ENCODE measurements at regions of chr7 and their contacts with region 1.

Region 1: GRCh38 chr7:157474689-157475088 is 137.9 kb downstream of the DNAJB6 start:
- DNase-seq: no peak
- H3K4me3 ChIP-seq: no peak overlapping the region
- H3K4me3 Mint-ChIP-seq: peak overlapping the region in 2 of 8 donors; percentile 13 to 34
- H3K27ac ChIP-seq: no peak overlapping the region
- H3K27ac Mint-ChIP-seq: peak overlapping the region in 5 of 7 donors; percentile 19 to 80 (median 43)
- H3K4me1 ChIP-seq: peaks cover 55% of the 10 kb centered on the region
- H3K4me1 Mint-ChIP-seq: peaks cover 33 to 82% (median 52%) of the 10 kb centered on the region in 4 donors
- H3K27me3 ChIP-seq: no peaks in the 10 kb centered on the region
- H3K27me3 Mint-ChIP-seq: no peaks in the 10 kb centered on the region

Region 2: DNA sequence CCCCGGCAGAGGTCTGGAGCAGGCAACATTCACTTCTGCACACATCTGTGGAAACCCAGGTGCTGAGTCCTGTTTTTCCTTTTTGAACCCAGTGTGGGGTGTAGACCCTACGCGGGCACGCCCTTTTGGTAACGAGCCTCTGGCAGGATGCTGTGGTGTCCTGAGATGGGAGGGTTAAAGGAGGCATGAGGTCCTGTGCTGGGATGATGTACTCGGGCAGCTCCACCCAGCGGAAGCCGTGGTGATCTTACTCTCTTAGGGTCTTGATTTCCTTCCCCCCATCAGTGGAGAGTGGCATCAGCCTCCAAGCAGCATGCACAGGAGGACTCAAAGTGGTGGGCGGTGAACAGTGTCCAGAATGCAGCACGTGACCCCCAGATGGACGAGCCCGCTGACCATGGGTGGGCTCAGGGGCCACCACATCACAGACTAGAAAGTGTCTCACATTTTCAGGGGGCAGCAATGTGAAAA is 10.7 kb after region 1 on chr7:
- CTCF ChIA-PET with region 1: interaction called, 6 read pairs
- POLR2A ChIA-PET with region 1: interaction called, 57 read pairs
- intact Hi-C with region 1: loop called (anchors 2 kb)
- DNase-seq: peak in 2 of 5 donors; percentile 24 to 35
- H3K4me3 ChIP-seq: no peak overlapping the region
- H3K4me3 Mint-ChIP-seq: peak overlapping the region in 5 of 8 donors; percentile 2 to 51 (median 20)
- H3K27ac ChIP-seq: no peak overlapping the region
- H3K27ac Mint-ChIP-seq: peak overlapping the region in 4 of 7 donors; percentile 30 to 70 (median 55)
- H3K4me1 ChIP-seq: peaks cover 29% of the 10 kb centered on the region
- H3K4me1 Mint-ChIP-seq: peaks cover 11 to 27% (median 20%) of the 10 kb centered on the region in 4 donors
- H3K27me3 ChIP-seq: no peaks in the 10 kb centered on the region
- H3K27me3 Mint-ChIP-seq: peaks cover 0 to 2% of the 10 kb centered on the region in 2 donors

Region 3: DNA sequence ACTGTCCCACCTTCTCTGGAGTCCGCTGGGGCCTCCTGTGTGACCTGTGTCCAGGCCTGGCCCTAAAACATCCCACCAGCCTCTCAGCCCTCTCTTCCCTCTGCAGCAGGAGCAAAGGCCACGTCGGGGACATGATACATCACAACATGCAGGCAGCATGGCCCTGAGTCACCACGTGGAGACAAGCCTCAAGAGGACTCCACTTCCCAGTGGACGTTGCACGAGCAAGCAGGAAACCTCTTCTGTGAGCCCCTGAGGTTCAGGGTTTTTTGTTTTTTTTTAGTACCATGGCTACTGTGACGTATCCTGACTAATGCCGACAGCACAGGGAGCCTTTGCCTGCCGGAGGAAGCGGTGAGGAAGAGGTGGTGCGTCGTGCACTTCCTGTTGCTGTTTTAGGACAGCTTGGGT is 28.0 kb after region 1 on chr7:
- CTCF ChIA-PET with region 1: interaction called, 4 read pairs
- POLR2A ChIA-PET with region 1: interaction called, 20 read pairs
- intact Hi-C with region 1: no loop called
- DNase-seq: peak; percentile 87 to 94 (median 90)
- H3K4me3 ChIP-seq: peak overlapping the region; percentile 26 to 29
- H3K4me3 Mint-ChIP-seq: peak overlapping the region; percentile 79 to 96 (median 82)
- H3K27ac ChIP-seq: peak overlapping the region; percentile 64
- H3K27ac Mint-ChIP-seq: peak overlapping the region; percentile 82 to 99 (median 98)
- H3K4me1 ChIP-seq: peaks cover 27% of the 10 kb centered on the region
- H3K4me1 Mint-ChIP-seq: peaks cover 22 to 40% (median 28%) of the 10 kb centered on the region in 4 donors
- H3K27me3 ChIP-seq: no peaks in the 10 kb centered on the region
- H3K27me3 Mint-ChIP-seq: peaks cover 2 to 12% of the 10 kb centered on the region in 2 donors

Region 4: GRCh38 chr7:157576440-157576886 is 101.8 kb after region 1 on chr7:
- CTCF ChIA-PET with region 1: no interaction called
- POLR2A ChIA-PET with region 1: interaction called, 13 read pairs
- intact Hi-C with region 1: no loop called
- DNase-seq: peak; percentile 62 to 82 (median 75)
- H3K4me3 ChIP-seq: peak overlapping the region in 1 of 2 donors; percentile 57
- H3K4me3 Mint-ChIP-seq: peak overlapping the region; percentile 73 to 87 (median 82)
- H3K27ac ChIP-seq: peak overlapping the region; percentile 34
- H3K27ac Mint-ChIP-seq: peak overlapping the region; percentile 76 to 97 (median 92)
- H3K4me1 ChIP-seq: peaks cover 11% of the 10 kb centered on the region
- H3K4me1 Mint-ChIP-seq: peaks cover 14 to 36% (median 26%) of the 10 kb centered on the region in 4 donors
- H3K27me3 ChIP-seq: no peaks in the 10 kb centered on the region
- H3K27me3 Mint-ChIP-seq: peaks cover 0 to 3% of the 10 kb centered on the region in 2 donors

Measured in CD4-positive, alpha-beta memory T cell (primary cell).